Gastrocnemius medialis (tissue), 4 donors: ENCODE measurements at regions of chr6 and their contacts with region 1.

Region 1: GRCh38 chr6:150813319-150813992 is 52.0 kb upstream of the MTHFD1L start:
- DNase-seq: no peak
- ATAC-seq: peak in 1 of 2 donors; percentile 28
- H3K4me3 ChIP-seq: no peak overlapping the region
- H3K27ac ChIP-seq: peak overlapping the region; percentile 41 to 62 (median 58)
- H3K4me1 ChIP-seq: no peaks in the 10 kb centered on the region
- H3K27me3 ChIP-seq: no peaks in the 10 kb centered on the region
- CTCF ChIP-seq: no peak
- POLR2A ChIP-seq: no peak

Region 2: GRCh38 chr6:150068720-150069648 is 744.5 kb before region 1 on chr6 and contains the start of gene ULBP3:
- in situ Hi-C with region 1: loop called in 3 of 4 experiments (anchors 25 kb)
- intact Hi-C with region 1: no loop called
- DNase-seq: peak; percentile 69 to 83
- ATAC-seq: peak; percentile 77 to 83
- H3K4me3 ChIP-seq: peak within 1 kb of the TSS; percentile 67 to 91 (median 71)
- H3K27ac ChIP-seq: peak within 1 kb of the TSS; percentile 50 to 68 (median 57)
- H3K4me1 ChIP-seq: peaks cover 3 to 4% of the 10 kb centered on the region in 2 donors
- H3K27me3 ChIP-seq: no peaks in the 10 kb centered on the region
- CTCF ChIP-seq: peak in 4 of 5 experiments; percentile 27 to 67 (median 50)
- POLR2A ChIP-seq: peak; percentile 42 to 71
- total RNA-seq, gene ULBP3: 1.1 TPM in 1 of 4 donors, not detected in the others

Region 3: DNA sequence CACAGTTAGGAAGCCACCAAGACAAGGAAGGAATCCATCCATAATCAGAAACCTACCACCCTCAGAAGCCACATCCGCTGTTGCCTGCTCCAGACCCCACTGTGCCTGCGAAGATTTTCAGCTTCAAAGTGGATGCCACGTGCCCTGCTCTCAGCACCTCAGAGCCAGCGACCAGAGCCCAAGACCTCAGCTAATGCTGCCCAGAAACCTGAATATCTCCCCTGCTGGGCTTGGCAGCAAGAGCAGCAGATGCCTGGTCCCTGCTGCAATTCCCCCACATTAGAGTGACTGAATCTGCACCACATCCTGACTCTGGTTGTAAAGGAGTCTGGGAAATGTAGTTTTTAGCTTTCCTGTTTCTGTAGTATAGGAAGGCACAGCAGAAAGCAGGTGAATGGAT is 733.9 kb before region 1 on chr6:
- in situ Hi-C with region 1: loop called (anchors 25 kb)
- intact Hi-C with region 1: loop called (anchors 10 kb)
- DNase-seq: no peak
- ATAC-seq: no peak
- H3K4me3 ChIP-seq: no peak overlapping the region
- H3K27ac ChIP-seq: no peak overlapping the region
- H3K4me1 ChIP-seq: no peaks in the 10 kb centered on the region
- H3K27me3 ChIP-seq: no peaks in the 10 kb centered on the region
- CTCF ChIP-seq: no peak
- POLR2A ChIP-seq: no peak

Region 4: GRCh38 chr6:150409576-150410066 is 403.8 kb before region 1 on chr6:
- in situ Hi-C with region 1: loop called in 1 of 4 experiments (anchors 5 kb)
- intact Hi-C with region 1: no loop called
- DNase-seq: peak in 1 of 2 donors; percentile 35
- ATAC-seq: no peak
- H3K4me3 ChIP-seq: no peak overlapping the region
- H3K27ac ChIP-seq: no peak overlapping the region
- H3K4me1 ChIP-seq: peaks cover 6 to 20% of the 10 kb centered on the region in 2 donors
- H3K27me3 ChIP-seq: no peaks in the 10 kb centered on the region
- CTCF ChIP-seq: no peak
- POLR2A ChIP-seq: no peak

Region 5: DNA sequence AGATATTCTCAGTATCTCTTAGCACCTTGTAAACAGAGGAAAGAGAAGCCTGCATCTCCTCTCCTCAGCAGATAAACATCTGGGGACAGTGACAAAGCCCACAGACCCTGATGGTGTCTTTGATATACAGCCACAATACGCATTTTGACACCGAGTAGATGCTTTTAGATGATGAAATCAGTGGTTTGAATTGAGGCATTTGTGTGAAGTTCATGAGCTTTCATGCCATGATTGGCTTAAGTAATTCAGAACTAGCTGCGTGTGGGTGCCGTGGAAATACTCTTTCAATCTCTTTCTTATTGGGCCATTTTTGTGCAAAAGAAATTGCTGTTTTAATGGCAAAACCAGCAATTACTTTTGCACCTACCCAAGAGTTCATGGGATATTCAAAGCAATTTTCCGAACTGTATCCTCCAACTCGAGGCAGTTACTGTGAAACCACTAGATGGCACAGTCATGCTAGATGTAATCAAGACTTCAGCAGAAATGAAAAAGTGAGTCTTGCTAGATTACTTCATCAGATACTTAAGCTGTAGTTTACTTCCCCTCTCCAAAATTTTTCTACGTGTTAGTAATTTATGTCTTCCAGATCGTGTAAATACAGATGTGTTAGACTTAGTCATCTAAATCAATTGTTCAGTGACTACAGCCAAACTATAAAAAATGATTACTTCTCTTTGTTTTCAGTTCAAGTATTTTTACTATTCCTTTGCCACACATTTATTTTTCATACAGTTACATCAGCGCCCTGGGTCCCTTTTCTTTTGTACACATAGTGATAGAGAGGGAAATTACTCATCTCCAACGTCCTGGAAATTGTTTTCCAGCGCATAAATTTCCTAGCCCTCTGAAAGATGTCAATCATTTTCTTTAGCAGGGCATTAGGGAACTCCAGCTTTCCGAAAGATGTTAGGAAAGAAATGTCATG is 395.3 kb before region 1 on chr6:
- in situ Hi-C with region 1: loop called (anchors 5 kb)
- intact Hi-C with region 1: loop called (anchors 1 kb)
- DNase-seq: no peak
- ATAC-seq: peak; percentile 72 to 77
- H3K4me3 ChIP-seq: peak overlapping the region; percentile 44 to 56 (median 48)
- H3K27ac ChIP-seq: peak overlapping the region; percentile 27 to 64 (median 56)
- H3K4me1 ChIP-seq: peaks cover 0 to 6% of the 10 kb centered on the region in 2 donors
- H3K27me3 ChIP-seq: no peaks in the 10 kb centered on the region
- CTCF ChIP-seq: peak; percentile 35 to 68 (median 47)
- POLR2A ChIP-seq: no peak

Region 6: DNA sequence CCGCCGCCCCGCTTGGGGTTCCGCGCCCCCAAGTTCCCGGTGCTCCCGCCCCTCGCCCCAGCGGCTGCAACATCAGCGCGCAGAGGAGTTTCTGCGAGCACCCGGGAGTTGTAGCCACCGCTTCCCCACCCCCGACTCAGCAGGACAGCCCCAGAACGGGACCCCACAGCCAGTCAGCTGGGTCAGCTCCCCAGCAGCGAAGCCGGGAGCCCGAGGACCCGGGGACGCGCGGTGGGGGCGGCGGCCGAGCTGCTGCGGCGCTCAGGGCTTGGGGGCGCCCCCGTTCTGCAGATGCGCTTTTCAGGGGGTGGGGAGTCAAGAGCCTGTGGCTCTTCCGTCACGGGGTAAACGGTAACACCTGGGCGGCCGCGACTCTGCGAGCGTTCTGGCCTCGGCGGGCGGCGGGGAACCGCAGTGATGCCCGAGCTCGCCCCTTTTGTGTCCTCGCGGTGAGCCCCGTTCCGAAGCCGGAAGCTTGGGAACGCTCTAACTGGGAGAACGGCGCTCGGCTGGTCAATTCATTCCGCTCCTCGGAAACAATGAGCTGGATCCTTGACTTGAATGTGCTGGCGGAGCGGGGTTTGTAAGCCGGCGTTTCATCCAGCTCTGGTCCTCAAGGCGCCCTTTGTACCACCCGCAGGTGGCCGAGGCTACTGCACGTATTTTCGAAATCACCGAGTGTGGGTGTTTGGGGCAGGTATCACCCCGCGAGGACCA is 213.0 kb before region 1 on chr6:
- in situ Hi-C with region 1: no loop called
- intact Hi-C with region 1: loop called (anchors 10 kb)
- DNase-seq: peak; percentile 5 to 18
- ATAC-seq: peak; percentile 39 to 56
- H3K4me3 ChIP-seq: peak overlapping the region; percentile 59 to 69 (median 64)
- H3K27ac ChIP-seq: peak overlapping the region; percentile 58 to 77 (median 64)
- H3K4me1 ChIP-seq: peaks cover 3 to 5% of the 10 kb centered on the region in 2 donors
- H3K27me3 ChIP-seq: peaks cover 7 to 31% (median 19%) of the 10 kb centered on the region in 3 donors
- CTCF ChIP-seq: peak in 2 of 5 experiments; percentile 37 to 38
- POLR2A ChIP-seq: no peak